Activated T-helper 1 cell treated with anti-CD3 and anti-CD28 coated beads, Interleukin-12 subunit alpha, Interleukin-12 subunit beta, Interleukin-2, Interleukin-4 antibody, amounts not matched to agents 30 ng/mL and 10 ng/mL and 1 ng/mL, durations not matched to agents 14 hours and 24 hours and 36 hours (primary cell): ENCODE measurements at regions of chr5 and their contacts with region 1.

Region 1: GRCh38 chr5:59390074-59390659 is 503.4 kb downstream of the PDE4D start:
- DNase-seq: no peak
- H3K4me3 Mint-ChIP-seq: no peak overlapping the region
- H3K27ac Mint-ChIP-seq: no peak overlapping the region
- H3K4me1 Mint-ChIP-seq: no peaks in the 10 kb centered on the region
- H3K27me3 Mint-ChIP-seq: peaks cover 20% of the 10 kb centered on the region

Region 2: DNA sequence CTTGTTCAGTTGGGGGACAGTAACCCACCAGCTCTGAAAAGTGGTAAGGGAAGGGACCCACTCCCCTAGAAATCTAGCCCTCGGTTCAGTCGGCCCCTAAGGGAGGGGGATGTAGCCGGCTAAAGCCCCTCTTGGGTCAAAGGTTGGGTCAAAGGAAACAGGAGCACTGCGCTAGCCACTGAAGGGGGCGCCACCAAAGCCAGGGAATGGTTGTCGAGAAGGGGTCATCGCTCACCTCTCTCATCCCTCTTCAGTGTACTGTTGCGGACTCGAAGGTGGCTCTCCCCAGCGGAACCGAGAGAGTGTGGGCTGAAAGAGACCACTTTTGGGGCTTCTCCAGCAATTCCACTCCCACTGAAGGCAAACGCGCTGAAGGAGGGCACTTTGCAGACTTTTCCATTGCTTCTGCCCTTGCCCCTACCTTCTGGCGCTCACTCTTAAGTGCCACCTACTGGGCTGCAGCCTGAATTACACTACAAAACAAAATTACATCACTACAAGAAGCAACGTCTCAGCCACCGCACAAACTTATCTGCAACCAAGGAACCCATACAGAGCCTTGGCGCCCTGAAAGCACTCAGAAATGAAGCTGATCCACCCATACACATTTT is 106.5 kb after region 1 on chr5:
- intact Hi-C with region 1: loop called (anchors 2 kb)
- DNase-seq: no peak
- H3K4me3 Mint-ChIP-seq: no peak overlapping the region
- H3K27ac Mint-ChIP-seq: no peak overlapping the region
- H3K4me1 Mint-ChIP-seq: peaks cover 5% of the 10 kb centered on the region
- H3K27me3 Mint-ChIP-seq: peaks cover 24% of the 10 kb centered on the region

Region 3: GRCh38 chr5:59673438-59674058 is 283.4 kb after region 1 on chr5:
- intact Hi-C with region 1: loop called (anchors 1 kb)
- DNase-seq: no peak
- H3K4me3 Mint-ChIP-seq: no peak overlapping the region
- H3K27ac Mint-ChIP-seq: no peak overlapping the region
- H3K4me1 Mint-ChIP-seq: peaks cover 4% of the 10 kb centered on the region
- H3K27me3 Mint-ChIP-seq: peaks cover 6% of the 10 kb centered on the region

Region 4: GRCh38 chr5:59724482-59725391 is 334.6 kb after region 1 on chr5:
- intact Hi-C with region 1: loop called (anchors 1 kb)
- DNase-seq: no peak
- H3K4me3 Mint-ChIP-seq: no peak overlapping the region
- H3K27ac Mint-ChIP-seq: no peak overlapping the region
- H3K4me1 Mint-ChIP-seq: no peaks in the 10 kb centered on the region
- H3K27me3 Mint-ChIP-seq: peaks cover 7% of the 10 kb centered on the region

Region 5: DNA sequence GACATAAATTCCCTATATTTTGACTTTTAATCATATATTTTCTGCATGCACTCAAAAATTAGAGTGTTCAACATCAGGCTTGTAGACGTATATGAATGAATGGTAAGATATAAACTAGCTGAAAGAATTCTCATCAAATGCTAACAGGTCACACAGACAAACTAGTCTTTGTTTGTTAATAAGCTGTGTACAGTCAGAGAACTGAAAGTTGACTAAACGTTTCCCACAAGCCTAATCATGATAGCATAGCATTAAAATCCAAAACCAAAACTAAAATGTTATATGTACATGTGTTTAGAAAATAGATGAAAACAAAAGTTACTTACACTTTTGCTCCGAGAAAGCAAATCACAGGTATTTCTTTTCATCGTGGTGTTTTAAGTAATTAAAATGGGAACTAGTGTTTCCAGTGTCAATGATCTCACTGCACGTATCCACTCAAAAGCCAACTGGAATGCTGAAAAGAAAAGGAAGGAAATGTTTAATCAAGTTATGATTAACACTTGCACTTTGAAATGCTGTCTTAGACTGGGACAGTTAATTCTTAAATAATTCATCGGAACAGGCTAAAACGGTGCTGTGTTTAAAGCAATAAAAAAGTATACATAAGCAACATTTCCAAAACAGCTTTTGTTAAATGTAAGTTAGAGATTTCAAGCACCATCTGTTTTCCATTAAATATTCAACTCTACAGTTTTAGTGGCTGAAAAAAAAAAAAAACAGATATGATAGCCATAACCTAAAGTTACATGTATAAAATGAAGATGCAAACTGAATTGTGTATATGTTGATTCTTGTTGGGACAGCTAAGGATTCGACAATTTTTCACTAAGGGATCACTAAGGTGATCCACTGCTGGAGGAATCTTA is 795.3 kb after region 1 on chr5:
- intact Hi-C with region 1: no loop called
- DNase-seq: no peak
- H3K4me3 Mint-ChIP-seq: no peak overlapping the region
- H3K27ac Mint-ChIP-seq: no peak overlapping the region
- H3K4me1 Mint-ChIP-seq: no peaks in the 10 kb centered on the region
- H3K27me3 Mint-ChIP-seq: no peaks in the 10 kb centered on the region